ENCODE measurements at regions of chr22 and their contacts with region 1.

Region 1: GRCh38 chr22:42780070-42780540 is 59.4 kb upstream of the A4GALT start:
- DNase-seq: peak in 1 of 2 donors; percentile 72
- ATAC-seq: peak; percentile 91 to 98
- H3K4me3 ChIP-seq: no peak overlapping the region
- H3K27ac ChIP-seq: no peak overlapping the region
- H3K4me1 ChIP-seq: no peaks in the 10 kb centered on the region
- H3K27me3 ChIP-seq: no peaks in the 10 kb centered on the region
- CTCF ChIP-seq: peak; percentile 83 to 92 (median 87)
- POLR2A ChIP-seq: no peak

Region 2: GRCh38 chr22:42560781-42561180 is 219.3 kb before region 1 on chr22:
- in situ Hi-C with region 1: no loop called
- intact Hi-C with region 1: no loop called
- DNase-seq: no peak
- ATAC-seq: no peak
- H3K4me3 ChIP-seq: no peak overlapping the region
- H3K27ac ChIP-seq: no peak overlapping the region
- H3K4me1 ChIP-seq: no peaks in the 10 kb centered on the region
- H3K27me3 ChIP-seq: no peaks in the 10 kb centered on the region
- CTCF ChIP-seq: peak in 3 of 5 experiments; percentile 22 to 51 (median 33)
- POLR2A ChIP-seq: no peak

Region 3: DNA sequence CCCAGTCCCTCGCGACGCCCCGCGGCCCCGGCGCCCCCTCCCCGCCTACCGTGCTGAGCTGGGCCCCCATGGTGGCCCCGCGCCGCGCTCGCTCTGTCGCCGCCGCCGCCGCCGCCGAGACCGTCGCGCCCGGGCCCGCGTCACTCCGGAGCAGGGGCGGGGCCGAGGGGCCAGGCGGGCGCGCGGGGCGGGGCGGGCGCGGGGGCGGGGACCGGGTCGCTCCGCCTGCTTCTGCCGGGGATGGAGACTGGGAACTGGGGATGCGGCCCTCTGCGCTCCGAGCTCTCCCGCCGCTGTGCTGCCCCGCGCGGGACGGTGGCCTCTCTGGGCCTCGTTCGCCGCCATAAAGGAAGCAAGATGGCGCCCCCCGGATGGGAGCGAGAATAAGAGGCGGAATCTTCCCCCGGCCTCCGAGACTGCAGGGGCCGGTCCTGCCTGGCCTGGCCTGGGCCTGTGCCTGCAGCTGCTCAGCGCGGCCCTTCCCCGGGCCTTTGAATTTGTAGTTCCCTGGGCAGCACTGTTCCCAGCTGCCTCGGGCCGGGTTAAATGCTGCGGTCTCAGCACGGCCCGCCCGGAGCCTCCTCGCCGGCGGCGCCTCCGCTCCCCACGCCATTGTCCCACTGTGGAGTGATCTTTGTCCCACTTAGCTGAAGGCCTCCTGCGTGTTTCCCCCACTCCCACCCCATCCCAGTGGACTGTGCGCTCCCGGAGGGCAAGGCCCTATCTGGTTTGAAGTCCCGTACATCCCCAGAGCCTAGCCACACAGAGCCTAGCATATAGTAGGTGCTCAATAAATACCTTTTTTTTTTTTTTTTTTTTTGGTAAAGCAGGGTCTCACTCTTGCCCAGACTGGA is 130.6 kb before region 1 on chr22 and contains the start of gene CYB5R3:
- in situ Hi-C with region 1: loop called in 1 of 4 experiments (anchors 25 kb)
- intact Hi-C with region 1: no loop called
- DNase-seq: peak; percentile 71 to 76
- ATAC-seq: peak; percentile 75
- H3K4me3 ChIP-seq: peak within 1 kb of the TSS; percentile 77 to 100 (median 93)
- H3K27ac ChIP-seq: peak within 1 kb of the TSS; percentile 92 to 99 (median 98)
- H3K4me1 ChIP-seq: peaks cover 41 to 44% of the 10 kb centered on the region in 2 donors
- H3K27me3 ChIP-seq: no peaks in the 10 kb centered on the region
- CTCF ChIP-seq: peak in 1 of 5 experiments; percentile 11
- POLR2A ChIP-seq: peak; percentile 41 to 75
- total RNA-seq, gene CYB5R3: 44.3 to 163 (median 105) TPM

Region 4: GRCh38 chr22:42662114-42663021 is 117.7 kb before region 1 on chr22:
- in situ Hi-C with region 1: loop called in 2 of 4 experiments (anchors 10 to 25 kb)
- intact Hi-C with region 1: loop called (anchors 5 kb)
- DNase-seq: peak; percentile 56 to 75
- ATAC-seq: peak; percentile 88 to 97
- H3K4me3 ChIP-seq: peak overlapping the region; percentile 45 to 68 (median 60)
- H3K27ac ChIP-seq: peak overlapping the region in 2 of 4 donors; percentile 41 to 51
- H3K4me1 ChIP-seq: peaks cover 6 to 9% of the 10 kb centered on the region in 2 donors
- H3K27me3 ChIP-seq: no peaks in the 10 kb centered on the region
- CTCF ChIP-seq: peak; percentile 70 to 94 (median 86)
- POLR2A ChIP-seq: no peak

Region 5: DNA sequence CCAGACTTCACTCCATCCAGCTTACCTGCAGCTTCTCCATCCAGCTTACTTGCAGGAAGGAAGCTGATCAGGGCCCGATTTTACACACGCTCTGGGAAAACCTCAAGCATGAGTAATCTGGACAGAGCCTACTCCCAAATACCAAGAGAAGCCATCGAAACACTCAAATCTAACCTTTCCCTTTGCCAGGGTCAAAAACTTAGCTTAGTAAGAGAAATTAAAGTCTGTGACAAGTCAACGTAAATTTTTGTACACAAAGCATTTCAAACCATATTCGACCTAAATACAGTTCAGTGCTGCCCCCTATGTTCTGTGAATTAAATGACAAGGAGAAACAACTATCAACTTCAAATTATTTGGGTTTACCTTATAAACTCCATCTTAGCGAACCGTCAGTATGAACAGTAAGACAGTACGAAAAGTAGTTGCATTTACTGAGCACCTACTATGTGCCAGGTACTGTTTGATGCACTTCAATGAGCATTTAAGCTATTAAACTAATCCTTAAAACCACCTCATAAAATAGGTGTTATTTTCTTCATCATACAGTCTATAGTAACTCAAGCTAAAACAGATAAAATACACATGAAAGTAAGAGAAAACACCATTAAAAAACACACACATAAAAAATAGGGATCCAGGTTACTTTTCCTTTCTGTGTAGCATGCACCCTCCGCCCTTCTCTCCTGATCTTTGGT is 40.1 kb after region 1 on chr22:
- in situ Hi-C with region 1: loop called in 1 of 4 experiments (anchors 5 kb)
- intact Hi-C with region 1: no loop called
- DNase-seq: no peak
- ATAC-seq: peak in 1 of 2 donors; percentile 51
- H3K4me3 ChIP-seq: no peak overlapping the region
- H3K27ac ChIP-seq: peak overlapping the region in 2 of 4 donors; percentile 11 to 20
- H3K4me1 ChIP-seq: peaks cover 8 to 13% of the 10 kb centered on the region in 2 donors
- H3K27me3 ChIP-seq: no peaks in the 10 kb centered on the region
- CTCF ChIP-seq: peak in 3 of 5 experiments; percentile 41 to 59 (median 52)
- POLR2A ChIP-seq: no peak

Region 6: DNA sequence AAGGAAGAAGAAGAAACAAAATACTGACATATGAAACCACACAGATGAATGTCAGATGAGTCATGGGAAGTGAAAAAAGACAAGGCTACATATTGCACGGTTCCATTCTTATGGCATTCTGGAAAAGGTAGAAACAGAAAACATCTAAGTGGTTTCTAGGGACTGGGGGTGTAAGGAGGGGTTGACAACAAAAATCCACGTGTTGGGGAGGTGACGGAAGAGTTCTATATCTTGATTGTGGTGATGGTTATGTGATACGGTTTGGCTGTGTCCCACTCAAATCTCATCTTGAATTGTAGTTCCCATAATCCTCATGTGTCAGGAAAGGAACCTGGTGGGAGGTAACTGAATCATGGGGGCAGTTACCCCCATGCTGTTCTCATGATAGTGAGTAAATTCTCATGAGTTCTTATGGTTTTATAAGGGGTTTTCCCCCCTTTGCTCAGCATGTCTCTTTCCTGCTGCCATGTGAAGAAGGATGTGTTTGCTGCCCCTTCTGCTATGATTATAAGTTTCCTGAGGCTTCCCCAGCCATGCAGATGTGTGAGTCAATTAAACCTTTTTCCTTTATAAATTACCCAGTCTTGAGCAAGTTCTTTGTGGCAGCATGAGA is 83.3 kb after region 1 on chr22:
- in situ Hi-C with region 1: loop called in 1 of 4 experiments (anchors 10 kb)
- intact Hi-C with region 1: loop called (anchors 1 kb)
- DNase-seq: no peak
- ATAC-seq: peak in 1 of 2 donors; percentile 50
- H3K4me3 ChIP-seq: no peak overlapping the region
- H3K27ac ChIP-seq: peak overlapping the region in 3 of 4 donors; percentile 9 to 67 (median 19)
- H3K4me1 ChIP-seq: peaks cover 12 to 18% of the 10 kb centered on the region in 2 donors
- H3K27me3 ChIP-seq: no peaks in the 10 kb centered on the region
- CTCF ChIP-seq: no peak
- POLR2A ChIP-seq: no peak

Region 7: DNA sequence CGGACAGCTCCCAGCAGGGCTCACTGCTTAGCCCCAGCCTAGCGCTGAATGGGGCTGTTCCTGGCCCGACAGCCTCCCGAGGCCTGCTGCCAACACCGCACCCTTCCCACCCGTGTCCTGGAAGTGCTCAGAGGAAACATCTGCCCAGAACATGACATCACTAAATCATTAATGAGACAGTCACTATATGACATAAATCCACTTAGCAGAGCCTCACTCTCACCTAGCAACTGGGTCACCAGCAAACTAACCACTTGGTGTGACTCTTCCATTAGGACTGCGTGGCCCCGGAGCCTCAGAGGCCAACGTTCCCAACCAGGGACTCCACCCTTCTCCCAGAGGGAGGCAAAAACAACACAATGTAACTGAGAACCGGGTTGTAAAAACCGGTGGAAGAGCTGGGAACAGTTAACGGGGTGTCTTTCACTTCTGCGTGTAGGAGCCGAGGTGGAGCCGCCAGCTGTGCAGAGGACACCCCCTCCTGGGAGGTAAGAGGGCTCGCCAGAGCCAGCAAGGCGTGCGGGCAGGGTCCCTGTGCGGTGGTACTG is 256.3 kb after region 1 on chr22:
- in situ Hi-C with region 1: no loop called
- intact Hi-C with region 1: loop called (anchors 1 kb)
- DNase-seq: peak in 1 of 2 donors; percentile 28
- ATAC-seq: peak; percentile 64 to 74
- H3K4me3 ChIP-seq: no peak overlapping the region
- H3K27ac ChIP-seq: peak overlapping the region in 3 of 4 donors; percentile 7 to 51 (median 51)
- H3K4me1 ChIP-seq: no peaks in the 10 kb centered on the region
- H3K27me3 ChIP-seq: no peaks in the 10 kb centered on the region
- CTCF ChIP-seq: no peak
- POLR2A ChIP-seq: no peak